SK-N-SH (cell line): ENCODE measurements at regions of chr9 and their contacts with region 1.

Region 1: GRCh38 chr9:124420991-124421543 is 5.8 kb upstream of the PSMB7 start:
- DNase-seq: no peak
- H3K4me3 ChIP-seq: no peak overlapping the region
- H3K27ac ChIP-seq: no peak overlapping the region
- H3K4me1 ChIP-seq: peaks cover 0 to 4% of the 10 kb centered on the region in 2 experiments; a peak in 1 of 4 replicates
- H3K27me3 ChIP-seq: no peaks in the 10 kb centered on the region
- CTCF ChIP-seq: no peak
- EP300 ChIP-seq: no peak
- RAD21 ChIP-seq: no peak

Region 2: DNA sequence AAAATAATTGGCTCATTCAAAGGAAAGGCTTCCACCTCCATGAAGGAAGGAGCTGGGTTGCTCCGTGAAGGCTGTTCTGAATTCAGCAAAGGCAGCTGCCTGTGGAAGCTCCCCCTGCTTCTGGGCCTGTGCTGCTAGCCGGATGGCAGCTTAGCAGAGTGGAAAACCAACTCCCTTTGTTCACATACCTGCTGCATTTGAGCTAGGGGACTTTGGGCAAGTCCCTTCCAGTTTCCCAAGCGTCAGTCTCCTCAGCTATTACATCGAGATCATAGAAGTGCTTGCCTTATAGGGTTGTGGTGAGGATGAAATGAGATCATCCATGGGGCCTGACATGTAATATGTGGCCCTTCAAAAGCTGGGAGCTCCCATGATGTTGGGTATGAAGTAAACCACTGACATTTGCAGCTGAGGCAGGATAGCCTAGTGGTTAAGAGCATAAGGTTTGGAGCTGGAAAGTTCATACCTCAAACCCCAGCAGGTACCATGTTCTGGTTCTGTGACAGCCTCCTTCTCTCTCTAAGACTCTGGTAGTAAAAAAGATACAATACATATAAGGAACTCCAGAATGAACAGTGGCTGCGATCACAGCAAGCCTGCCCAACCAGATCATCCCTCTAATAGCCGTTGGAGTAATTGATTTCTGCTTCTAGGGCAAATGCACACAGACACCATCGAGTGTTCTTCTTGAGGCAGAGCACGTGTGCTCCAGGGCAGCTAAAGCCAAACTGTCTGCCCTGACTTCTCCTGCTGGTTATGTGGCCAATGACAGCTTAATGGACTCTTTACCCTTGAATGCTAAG is 480.1 kb before region 1 on chr9:
- CTCF ChIA-PET with region 1: no interaction called
- POLR2A ChIA-PET with region 1: no interaction called
- DNase-seq: no peak
- H3K4me3 ChIP-seq: no peak overlapping the region
- H3K27ac ChIP-seq: no peak overlapping the region
- H3K4me1 ChIP-seq: no peaks in the 10 kb centered on the region
- H3K27me3 ChIP-seq: peaks cover 6% of the 10 kb centered on the region; the same call in 1 of the 2 replicates
- CTCF ChIP-seq: no peak
- EP300 ChIP-seq: no peak
- RAD21 ChIP-seq: no peak

Region 3: GRCh38 chr9:124040935-124041816 is 379.9 kb before region 1 on chr9:
- CTCF ChIA-PET with region 1: no interaction called
- POLR2A ChIA-PET with region 1: no interaction called
- DNase-seq: peak; percentile 93
- H3K4me3 ChIP-seq: peak overlapping the region; percentile 39 to 62
- H3K27ac ChIP-seq: no peak overlapping the region
- H3K4me1 ChIP-seq: peaks cover 0 to 10% of the 10 kb centered on the region in 2 experiments; a peak in 1 of 4 replicates
- H3K27me3 ChIP-seq: peaks cover 34% of the 10 kb centered on the region; the same call in 1 of the 2 replicates
- CTCF ChIP-seq: peak; percentile 93
- EP300 ChIP-seq: no peak
- RAD21 ChIP-seq: peak; percentile 64

Region 4: GRCh38 chr9:124399323-124399967 is 21.6 kb before region 1 on chr9:
- CTCF ChIA-PET with region 1: interaction called, 10 read pairs
- POLR2A ChIA-PET with region 1: no interaction called
- DNase-seq: no peak
- H3K4me3 ChIP-seq: no peak overlapping the region
- H3K27ac ChIP-seq: no peak overlapping the region
- H3K4me1 ChIP-seq: peaks cover 0 to 7% of the 10 kb centered on the region in 2 experiments; a peak in 2 of 4 replicates
- H3K27me3 ChIP-seq: no peaks in the 10 kb centered on the region
- CTCF ChIP-seq: no peak
- EP300 ChIP-seq: no peak
- RAD21 ChIP-seq: no peak

Region 5: DNA sequence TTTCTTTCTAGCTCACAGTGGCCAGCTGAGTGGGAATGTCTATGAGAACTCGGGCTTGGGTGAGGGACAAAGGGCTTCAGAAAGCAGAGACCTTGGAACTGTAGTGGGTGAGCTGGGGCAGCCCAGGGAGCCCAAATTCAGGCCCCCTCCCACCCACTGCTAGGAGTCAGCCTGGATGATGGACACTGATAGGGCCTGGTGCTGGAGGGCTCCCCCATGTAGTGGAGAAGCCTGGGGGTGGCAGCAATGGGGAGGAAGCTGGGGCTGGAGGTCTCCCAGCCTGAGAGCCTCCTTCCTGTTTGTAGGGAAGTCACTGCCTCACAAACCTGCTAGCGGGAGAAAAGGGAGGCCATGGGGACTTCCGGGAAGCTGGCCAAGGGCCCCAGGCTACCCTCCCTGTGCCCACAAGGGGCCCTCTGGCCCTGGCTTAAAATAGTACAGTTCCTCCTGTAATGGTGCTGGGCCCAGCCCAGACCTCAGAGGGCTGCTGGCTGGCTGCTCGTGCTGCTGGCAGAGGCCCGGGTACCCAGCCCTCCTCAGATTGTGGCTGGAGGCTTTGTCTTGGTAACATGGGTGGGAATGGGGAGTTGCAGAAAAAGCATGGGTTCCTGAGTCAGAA is 92.4 kb after region 1 on chr9:
- CTCF ChIA-PET with region 1: interaction called, 20 read pairs
- POLR2A ChIA-PET with region 1: no interaction called
- DNase-seq: peak; percentile 42
- H3K4me3 ChIP-seq: no peak overlapping the region
- H3K27ac ChIP-seq: no peak overlapping the region
- H3K4me1 ChIP-seq: peaks cover 0 to 31% of the 10 kb centered on the region in 2 experiments; a peak in 2 of 4 replicates
- H3K27me3 ChIP-seq: no peaks in the 10 kb centered on the region
- CTCF ChIP-seq: no peak
- EP300 ChIP-seq: no peak
- RAD21 ChIP-seq: no peak

Region 6: GRCh38 chr9:124551472-124552272 is 130.6 kb after region 1 on chr9:
- CTCF ChIA-PET with region 1: interaction called, 14 read pairs
- POLR2A ChIA-PET with region 1: no interaction called
- DNase-seq: peak; percentile 66
- H3K4me3 ChIP-seq: peak overlapping the region in 1 of 2 experiments; percentile 13; a peak in 1 of 4 replicates
- H3K27ac ChIP-seq: peak overlapping the region in 1 of 2 experiments; percentile 33; a peak in 2 of 4 replicates
- H3K4me1 ChIP-seq: peaks cover 3 to 5% of the 10 kb centered on the region in 2 experiments; a peak in 2 of 4 replicates
- H3K27me3 ChIP-seq: no peaks in the 10 kb centered on the region
- CTCF ChIP-seq: peak; percentile 88
- EP300 ChIP-seq: no peak
- RAD21 ChIP-seq: peak; percentile 87

Region 7: GRCh38 chr9:124639637-124640036 is 218.6 kb after region 1 on chr9:
- CTCF ChIA-PET with region 1: no interaction called
- POLR2A ChIA-PET with region 1: no interaction called
- DNase-seq: no peak
- H3K4me3 ChIP-seq: no peak overlapping the region
- H3K27ac ChIP-seq: no peak overlapping the region
- H3K4me1 ChIP-seq: no peaks in the 10 kb centered on the region
- H3K27me3 ChIP-seq: no peaks in the 10 kb centered on the region
- CTCF ChIP-seq: no peak
- EP300 ChIP-seq: no peak
- RAD21 ChIP-seq: no peak